HCT116 (cell line): ENCODE measurements at regions of chr5 and their contacts with region 1.

Region 1: DNA sequence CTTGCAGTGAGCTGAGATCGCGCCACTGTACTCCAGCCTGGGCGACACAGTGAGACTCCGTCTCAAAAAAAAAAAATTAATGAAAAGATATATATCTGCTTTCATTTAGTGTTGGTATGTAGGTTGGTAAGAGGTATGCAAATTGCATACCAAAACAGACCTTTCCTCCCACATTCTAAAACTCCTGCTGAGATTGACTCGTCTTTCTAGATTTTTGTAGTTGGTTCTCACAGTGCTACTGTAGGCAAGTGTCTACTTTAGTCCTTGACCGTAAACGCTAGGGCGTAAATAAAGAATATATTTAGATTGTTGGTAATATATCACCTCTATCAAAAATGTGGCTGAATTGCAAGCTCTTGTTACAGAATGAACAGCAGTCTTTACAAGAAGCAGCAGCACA is 445.9 kb downstream of the CHSY3 start:
- DNase-seq: no peak
- ATAC-seq: no peak
- H3K4me3 ChIP-seq: no peak overlapping the region
- H3K27ac ChIP-seq: no peak overlapping the region
- H3K4me1 ChIP-seq: no peaks in the 10 kb centered on the region
- H3K27me3 ChIP-seq: no peaks in the 10 kb centered on the region
- CTCF ChIP-seq: no peak
- POLR2A ChIP-seq: no peak
- RAD21 ChIP-seq: no peak

Region 2: GRCh38 chr5:130331332-130331731 is 18.8 kb before region 1 on chr5:
- CTCF ChIA-PET with region 1: no interaction called
- POLR2A ChIA-PET with region 1: no interaction called
- RAD21 ChIA-PET with region 1: no interaction called
- intact Hi-C with region 1: loop called (anchors 2 kb)
- DNase-seq: no peak
- ATAC-seq: no peak
- H3K4me3 ChIP-seq: no peak overlapping the region
- H3K27ac ChIP-seq: no peak overlapping the region
- H3K4me1 ChIP-seq: no peaks in the 10 kb centered on the region
- H3K27me3 ChIP-seq: no peaks in the 10 kb centered on the region
- CTCF ChIP-seq: no peak
- POLR2A ChIP-seq: no peak
- RAD21 ChIP-seq: no peak